Adrenal gland (tissue), 19 donors: ENCODE measurements at regions of chr19 and their contacts with region 1.

Region 1: GRCh38 chr19:8001995-8002849 is 3.2 kb downstream of the ELAVL1 start:
- DNase-seq: peak; percentile 76 to 93 (median 83)
- H3K4me3 ChIP-seq: peak overlapping the region in 1 of 4 donors; percentile 33
- H3K27ac ChIP-seq: peak overlapping the region in 3 of 5 donors; percentile 11 to 66 (median 65)
- H3K4me1 ChIP-seq: peaks cover 37 to 60% of the 10 kb centered on the region in 2 donors
- H3K27me3 ChIP-seq: no peaks in the 10 kb centered on the region
- CTCF ChIP-seq: peak; percentile 90 to 97 (median 92)
- POLR2A ChIP-seq: no peak

Region 2: DNA sequence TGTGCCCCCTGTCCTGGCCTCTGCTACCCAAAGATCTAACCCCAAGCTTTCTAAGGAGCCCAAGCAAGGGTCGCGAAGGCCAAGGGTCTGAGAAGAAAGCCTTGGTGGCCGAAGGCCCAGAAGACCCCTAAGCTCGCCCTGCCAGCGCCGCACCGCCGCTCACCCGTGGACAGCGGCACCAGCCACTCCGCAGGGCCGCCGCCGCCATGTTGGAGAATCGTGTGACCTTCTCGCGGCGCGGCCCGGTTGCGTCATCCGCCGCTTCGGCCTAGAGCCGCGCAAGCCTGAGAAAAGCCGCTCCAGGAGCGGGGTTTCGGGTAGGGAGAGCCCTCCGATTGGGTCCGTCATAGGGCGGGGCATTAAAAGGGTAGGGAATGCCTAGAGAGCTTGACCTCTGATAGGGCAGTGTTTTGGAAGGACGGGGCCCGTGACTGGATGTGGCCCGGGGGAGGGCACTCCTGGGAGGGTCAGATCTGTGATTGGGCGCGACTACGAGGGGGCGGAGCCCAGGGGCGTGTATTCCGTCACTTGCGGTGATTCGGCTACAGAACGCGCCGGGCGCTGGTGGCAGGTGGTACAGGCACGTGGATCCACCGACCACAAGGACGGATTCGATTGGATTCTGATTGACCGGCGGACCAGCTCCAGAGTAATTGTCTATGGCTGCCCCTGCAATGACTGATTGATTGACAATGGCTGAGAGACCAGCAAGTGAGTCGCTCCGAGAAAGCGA is 58.6 kb before region 1 on chr19 and contains the start of gene TIMM44:
- intact Hi-C with region 1: loop called in 1 of 2 experiments (anchors 2 kb)
- DNase-seq: peak; percentile 99 to 100 (median 100)
- H3K4me3 ChIP-seq: peak within 1 kb of the TSS; percentile 48 to 97 (median 81)
- H3K27ac ChIP-seq: peak within 1 kb of the TSS; percentile 81 to 97 (median 96)
- H3K4me1 ChIP-seq: peaks cover 7 to 13% of the 10 kb centered on the region in 2 donors
- H3K27me3 ChIP-seq: no peaks in the 10 kb centered on the region
- CTCF ChIP-seq: no peak
- POLR2A ChIP-seq: peak; percentile 56 to 90
- total RNA-seq, gene TIMM44: 48.1 to 88.2 (median 58.9) TPM